Activated CD8-positive, alpha-beta T cell treated with anti-CD3 and anti-CD28 coated beads for 36 hours (primary cell): ENCODE measurements at regions of chr4 and their contacts with region 1.

Region 1: DNA sequence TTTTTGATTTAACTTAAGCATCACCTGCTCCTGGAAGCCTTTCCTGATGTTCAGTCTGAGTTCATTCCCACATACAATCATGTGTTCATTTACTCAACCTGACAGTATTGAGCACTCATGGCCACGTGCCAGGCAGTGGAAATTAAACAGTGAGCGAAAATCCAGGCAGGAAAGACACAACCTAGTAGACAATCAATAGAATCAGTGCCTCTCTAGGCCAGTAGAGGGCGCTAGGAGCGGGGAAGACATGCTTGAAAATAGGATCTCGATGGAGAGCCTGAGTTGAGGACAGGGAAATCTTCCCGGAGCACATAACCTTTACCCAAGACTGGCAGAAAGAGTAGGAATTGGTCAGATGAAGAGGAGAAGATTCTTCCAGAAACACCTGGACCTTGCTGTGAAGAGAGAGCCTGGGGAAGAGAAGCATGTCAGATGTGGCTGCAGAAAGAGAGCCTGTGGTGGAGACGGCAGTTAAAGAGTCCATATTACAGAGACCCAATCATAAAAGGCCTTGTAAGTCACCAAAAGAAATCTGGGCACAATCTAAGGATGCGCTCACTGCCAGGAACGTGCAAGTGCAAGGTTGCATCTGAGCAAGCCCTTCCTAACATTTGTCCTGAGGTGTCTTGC is 103.5 kb downstream of the LDB2 start:
- DNase-seq: peak; percentile 65
- ATAC-seq: no peak
- H3K4me3 Mint-ChIP-seq: no peak overlapping the region
- H3K27ac Mint-ChIP-seq: no peak overlapping the region
- H3K4me1 Mint-ChIP-seq: no peaks in the 10 kb centered on the region
- H3K27me3 Mint-ChIP-seq: no peaks in the 10 kb centered on the region
- CTCF ChIP-seq: peak; percentile 80

Region 2: GRCh38 chr4:16750882-16751642 is 43.9 kb before region 1 on chr4:
- CTCF ChIA-PET with region 1: no interaction called
- POLR2A ChIA-PET with region 1: no interaction called
- intact Hi-C with region 1: no loop called
- DNase-seq: no peak
- ATAC-seq: no peak
- H3K4me3 Mint-ChIP-seq: no peak overlapping the region
- H3K27ac Mint-ChIP-seq: no peak overlapping the region
- H3K4me1 Mint-ChIP-seq: no peaks in the 10 kb centered on the region
- H3K27me3 Mint-ChIP-seq: no peaks in the 10 kb centered on the region
- CTCF ChIP-seq: no peak

Region 3: DNA sequence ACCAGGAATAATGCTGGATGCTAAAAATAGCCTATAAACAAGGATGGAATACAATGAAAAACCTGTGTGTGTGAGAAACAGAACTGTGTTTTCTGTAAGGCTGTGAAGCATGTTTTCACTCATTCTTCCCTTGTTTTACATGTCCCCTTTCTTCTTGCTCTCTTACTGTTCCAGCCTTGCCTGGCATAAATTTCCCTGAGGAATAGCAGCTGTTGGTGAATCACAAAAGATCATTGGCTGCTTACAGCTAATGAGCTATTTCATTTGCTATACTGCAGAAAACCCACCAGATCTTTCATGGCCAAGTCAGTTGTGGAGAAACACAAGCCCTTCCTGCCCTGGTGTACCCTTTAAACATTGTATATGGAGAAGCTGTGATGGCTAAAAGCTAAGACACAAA is 12.4 kb after region 1 on chr4:
- CTCF ChIA-PET with region 1: interaction called, 14 read pairs
- POLR2A ChIA-PET with region 1: no interaction called
- intact Hi-C with region 1: no loop called
- DNase-seq: no peak
- ATAC-seq: no peak
- H3K4me3 Mint-ChIP-seq: no peak overlapping the region
- H3K27ac Mint-ChIP-seq: no peak overlapping the region
- H3K4me1 Mint-ChIP-seq: no peaks in the 10 kb centered on the region
- H3K27me3 Mint-ChIP-seq: peaks cover 7% of the 10 kb centered on the region
- CTCF ChIP-seq: no peak